Activated T-helper 2 cell treated with anti-CD3 and anti-CD28 coated beads, Interferon-gamma antibody, Interleukin-2, Interleukin-4, amounts not matched to agents 10 μg/mL and 5 μg/mL and 100 μg/mL, durations not matched to agents 14 hours and 24 hours and 36 hours (primary cell): ENCODE measurements at regions of chr1 and their contacts with region 1.

Region 1: DNA sequence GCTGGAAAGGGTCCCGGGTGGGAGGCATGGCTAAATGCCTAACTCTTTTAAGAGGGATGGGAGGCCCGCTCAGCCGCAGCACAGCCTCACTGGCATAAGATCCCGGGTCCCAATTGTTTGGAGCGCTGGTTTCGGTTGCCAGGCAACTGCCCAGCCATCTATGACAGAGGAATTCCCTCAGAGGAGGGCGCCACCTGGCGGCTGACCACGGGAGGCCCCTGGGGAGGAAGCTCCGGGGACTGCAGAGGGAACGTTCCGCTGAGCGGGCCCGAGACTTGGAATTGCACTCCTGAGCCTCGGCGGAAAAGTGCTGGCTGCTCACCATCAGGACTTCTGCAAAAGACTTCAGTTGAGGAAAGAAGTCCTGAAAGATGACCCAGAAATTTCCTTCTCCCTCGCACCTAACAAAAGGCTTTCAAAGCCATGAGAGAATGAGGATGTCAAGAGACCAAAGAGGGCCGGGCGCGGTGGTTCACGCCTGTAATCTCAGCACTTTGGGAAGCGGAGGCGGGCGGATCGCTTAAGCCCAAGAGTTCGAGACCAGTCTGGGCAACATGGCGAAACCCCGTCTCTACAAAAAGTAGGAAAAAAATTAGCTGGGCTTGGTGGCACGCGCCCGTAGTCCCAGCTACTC is 1.1 kb upstream of the ELAPOR1 start:
- DNase-seq: peak; percentile 82
- H3K4me3 Mint-ChIP-seq: peak overlapping the region; percentile 69
- H3K27ac Mint-ChIP-seq: peak overlapping the region; percentile 64
- H3K4me1 Mint-ChIP-seq: peaks cover 36% of the 10 kb centered on the region
- H3K27me3 Mint-ChIP-seq: peaks cover 22% of the 10 kb centered on the region

Region 2: DNA sequence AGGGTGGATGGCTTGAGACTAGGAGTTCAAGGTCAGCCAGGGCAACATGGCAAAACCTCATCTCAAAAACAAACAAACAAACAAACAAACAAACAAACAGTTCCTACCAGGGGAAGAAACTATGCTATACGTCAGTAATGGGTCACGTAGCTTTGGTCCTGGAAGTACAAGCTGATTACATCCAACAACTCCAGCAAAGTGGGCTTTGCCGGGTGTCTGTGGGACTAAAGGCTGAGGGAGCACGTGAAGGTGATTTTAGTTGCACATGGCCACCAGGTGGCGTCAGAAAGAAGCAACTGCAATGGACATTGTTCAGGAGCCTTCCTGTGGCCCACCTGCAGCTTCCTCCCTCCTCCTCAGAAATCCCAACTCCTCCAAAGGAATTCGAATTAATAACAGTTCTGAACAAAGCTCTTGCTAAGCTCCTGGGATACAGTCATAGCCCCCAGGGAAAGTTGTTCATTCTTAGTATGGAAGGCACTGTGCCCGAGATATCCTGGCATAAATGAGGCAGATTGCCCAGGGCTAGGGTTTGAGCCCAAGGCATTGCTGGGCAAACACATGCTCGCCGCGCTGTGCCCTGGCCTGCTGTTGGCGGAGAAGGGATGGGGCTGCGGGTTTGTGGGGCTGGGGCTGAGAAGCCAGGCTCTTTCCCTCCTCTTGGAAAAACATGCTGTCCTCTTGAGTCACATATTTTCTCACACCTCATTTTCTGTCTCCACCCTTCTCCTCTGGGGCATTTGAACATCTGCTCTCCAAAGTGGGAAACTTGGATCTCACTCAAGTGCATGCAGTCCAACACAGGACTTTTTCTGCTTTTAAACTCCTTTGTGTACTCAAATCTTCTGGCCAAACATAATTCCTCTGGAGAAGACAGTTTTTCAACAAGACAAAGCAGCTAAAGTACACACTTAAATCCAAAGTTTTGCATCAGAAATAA is 284.5 kb before region 1 on chr1:
- intact Hi-C with region 1: loop called (anchors 1 kb)
- DNase-seq: peak; percentile 50
- H3K4me3 Mint-ChIP-seq: no peak overlapping the region
- H3K27ac Mint-ChIP-seq: no peak overlapping the region
- H3K4me1 Mint-ChIP-seq: peaks cover 3% of the 10 kb centered on the region
- H3K27me3 Mint-ChIP-seq: peaks cover 6% of the 10 kb centered on the region

Region 3: DNA sequence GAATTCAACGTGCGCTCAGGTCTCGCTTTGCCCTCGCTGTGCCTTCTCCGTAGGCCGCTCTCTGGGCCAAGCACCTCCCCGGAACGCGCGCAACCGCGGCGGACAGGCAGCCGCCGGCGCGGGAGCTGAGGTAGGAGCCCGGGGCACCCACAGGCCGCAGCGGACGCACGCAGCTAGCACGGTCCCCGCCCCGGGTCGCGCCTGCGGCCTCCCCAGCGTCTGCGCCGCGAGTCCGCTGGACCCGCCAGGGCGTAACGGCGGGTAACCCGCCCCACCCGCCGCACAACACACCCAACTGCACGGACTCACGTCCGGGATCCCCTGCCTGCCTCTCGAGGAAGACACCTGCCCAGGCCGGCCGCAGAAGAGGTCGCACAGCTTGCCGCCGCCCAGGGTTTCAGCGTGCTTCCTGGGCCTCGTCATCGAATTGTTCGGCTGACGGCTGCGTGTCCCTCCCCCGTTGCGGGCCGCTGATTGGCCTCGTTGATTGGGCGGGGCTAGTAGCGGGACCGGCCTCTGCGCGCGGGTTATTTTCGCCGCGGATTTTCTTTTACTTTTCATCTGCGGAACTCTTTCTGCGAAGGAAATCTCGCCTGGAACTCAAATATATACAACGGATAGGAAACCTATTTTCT is 149.6 kb before region 1 on chr1 and contains the start of gene CLCC1:
- intact Hi-C with region 1: loop called (anchors 5 kb)
- DNase-seq: peak; percentile 93
- H3K4me3 Mint-ChIP-seq: peak within 1 kb of the TSS; percentile 89
- H3K27ac Mint-ChIP-seq: peak within 1 kb of the TSS; percentile 94
- H3K4me1 Mint-ChIP-seq: peaks cover 17% of the 10 kb centered on the region
- H3K27me3 Mint-ChIP-seq: no peaks in the 10 kb centered on the region
- total RNA-seq, gene CLCC1: 21.8 and 26.7 TPM in 2 replicates

Region 4: GRCh38 chr1:109075531-109076490 is 37.0 kb before region 1 on chr1 and contains the start of gene TAF13:
- intact Hi-C with region 1: no loop called
- DNase-seq: peak; percentile 83
- H3K4me3 Mint-ChIP-seq: peak within 1 kb of the TSS; percentile 96
- H3K27ac Mint-ChIP-seq: peak within 1 kb of the TSS; percentile 88
- H3K4me1 Mint-ChIP-seq: peaks cover 13% of the 10 kb centered on the region
- H3K27me3 Mint-ChIP-seq: no peaks in the 10 kb centered on the region
- total RNA-seq, gene TAF13: 21.6 and 25.0 TPM in 2 replicates

Region 5: GRCh38 chr1:109099938-109100773 is 12.6 kb before region 1 on chr1:
- intact Hi-C with region 1: loop called (anchors 1 kb)
- DNase-seq: peak; percentile 95
- H3K4me3 Mint-ChIP-seq: peak overlapping the region; percentile 99
- H3K27ac Mint-ChIP-seq: peak overlapping the region; percentile 94
- H3K4me1 Mint-ChIP-seq: peaks cover 3% of the 10 kb centered on the region
- H3K27me3 Mint-ChIP-seq: no peaks in the 10 kb centered on the region

Region 6: GRCh38 chr1:109213785-109214468 is 101.2 kb after region 1 on chr1 and contains the start of gene SARS1:
- intact Hi-C with region 1: loop called (anchors 5 kb)
- DNase-seq: peak; percentile 86
- H3K4me3 Mint-ChIP-seq: peak within 1 kb of the TSS; percentile 98
- H3K27ac Mint-ChIP-seq: peak within 1 kb of the TSS; percentile 89
- H3K4me1 Mint-ChIP-seq: peaks cover 28% of the 10 kb centered on the region
- H3K27me3 Mint-ChIP-seq: peaks cover 3% of the 10 kb centered on the region
- total RNA-seq, gene SARS1: 128 and 129 TPM in 2 replicates

Region 7: DNA sequence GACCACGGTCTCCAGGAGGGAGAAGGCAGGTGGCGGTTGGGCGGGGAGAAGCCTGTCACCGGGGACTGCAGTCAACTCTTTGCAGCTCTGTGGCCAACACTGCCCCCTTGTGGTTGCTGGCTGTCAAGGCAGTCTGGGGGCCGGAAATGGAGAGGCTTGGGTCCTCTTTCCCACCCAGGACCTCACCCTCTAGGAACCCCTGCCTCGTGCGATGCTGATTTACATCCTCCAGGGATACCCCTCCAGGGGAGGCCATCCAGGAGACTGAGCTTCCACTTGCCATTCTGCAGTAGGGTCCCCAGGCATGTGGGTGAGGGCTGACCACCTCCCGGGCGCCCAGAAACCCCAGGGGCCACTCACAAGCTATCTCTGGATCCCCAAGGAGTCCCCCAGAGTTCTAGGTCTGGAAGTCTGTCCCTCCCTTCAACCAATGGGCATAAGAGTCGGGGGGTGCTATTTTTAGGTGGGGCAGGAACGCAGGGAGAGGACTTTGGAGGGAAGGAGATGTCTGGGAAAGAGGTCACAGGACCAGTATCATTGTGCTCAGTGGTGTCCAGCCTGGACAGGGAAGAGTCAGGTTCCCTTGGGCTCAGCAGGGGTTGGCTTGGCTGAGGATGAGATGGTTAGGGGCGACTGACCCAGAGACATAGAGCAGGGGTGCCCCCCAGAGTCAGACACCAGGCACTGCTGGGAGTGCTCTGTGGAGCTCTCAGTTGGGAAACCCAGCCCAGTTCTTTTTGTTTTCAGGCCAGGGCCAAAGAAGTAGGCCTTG is 419.8 kb after region 1 on chr1:
- intact Hi-C with region 1: loop called (anchors 10 kb)
- DNase-seq: peak; percentile 83
- H3K4me3 Mint-ChIP-seq: peak overlapping the region; percentile 32
- H3K27ac Mint-ChIP-seq: peak overlapping the region; percentile 80
- H3K4me1 Mint-ChIP-seq: peaks cover 19% of the 10 kb centered on the region
- H3K27me3 Mint-ChIP-seq: no peaks in the 10 kb centered on the region